GM12878 (cell line): ENCODE measurements at regions of chr19 and their contacts with region 1.

Region 1: GRCh38 chr19:771332-771785 is 20.4 kb downstream of the MISP start:
- DNase-seq: no peak
- ATAC-seq: peak; percentile 77
- H3K4me3 ChIP-seq: no peak overlapping the region
- H3K27ac ChIP-seq: no peak overlapping the region
- H3K4me1 ChIP-seq: no peaks in the 10 kb centered on the region
- H3K27me3 ChIP-seq: no peaks in the 10 kb centered on the region
- CTCF ChIP-seq: peak; percentile 39 to 57 (median 40); a peak in 5 of 6 replicates
- EP300 ChIP-seq: no peak
- POLR2A ChIP-seq: no peak
- RAD21 ChIP-seq: no peak

Region 2: DNA sequence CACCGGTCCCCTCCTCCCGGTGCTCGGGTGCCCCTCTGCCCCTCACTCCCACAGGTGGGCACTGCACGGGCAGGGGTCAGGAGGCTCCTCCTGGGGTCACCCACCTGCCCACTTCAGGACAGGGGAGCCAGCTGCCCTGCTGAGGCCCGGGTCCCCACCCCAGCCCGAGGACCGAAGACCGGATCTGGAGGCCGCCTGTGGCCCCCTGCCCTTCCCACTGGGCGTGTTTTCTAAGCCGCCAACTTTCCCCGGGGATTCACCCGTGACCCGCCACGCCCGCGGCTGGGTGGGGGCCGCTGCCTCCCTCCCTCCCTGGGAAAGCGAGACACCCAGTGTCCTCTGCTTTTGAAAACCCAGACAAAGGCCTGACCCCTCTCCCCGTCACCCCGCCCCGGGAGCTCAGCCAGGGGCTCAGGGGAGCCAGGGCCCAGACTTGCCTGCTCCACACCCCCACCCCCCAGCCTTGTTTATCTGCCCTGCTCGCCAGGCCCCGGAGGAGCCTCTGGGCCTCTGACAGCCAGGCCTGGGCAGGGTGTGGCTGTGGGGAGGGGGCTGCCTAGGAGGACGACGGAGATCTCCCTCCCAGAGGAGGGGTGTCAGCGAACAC is 61.3 kb before region 1 on chr19:
- CTCF ChIA-PET with region 1: no interaction called
- POLR2A ChIA-PET with region 1: no interaction called
- RAD21 ChIA-PET with region 1: no interaction called
- SMC1A ChIA-PET with region 1: no interaction called
- in situ Hi-C with region 1: no loop called
- intact Hi-C with region 1: no loop called
- DNase-seq: no peak
- ATAC-seq: no peak
- H3K4me3 ChIP-seq: no peak overlapping the region
- H3K27ac ChIP-seq: no peak overlapping the region
- H3K4me1 ChIP-seq: no peaks in the 10 kb centered on the region
- H3K27me3 ChIP-seq: peaks cover 0 to 2% of the 10 kb centered on the region in 2 experiments; a peak in 2 of 4 replicates
- CTCF ChIP-seq: no peak
- EP300 ChIP-seq: no peak
- POLR2A ChIP-seq: no peak
- RAD21 ChIP-seq: no peak

Region 3: GRCh38 chr19:821825-822503 is 50.6 kb after region 1 on chr19 and contains the start of gene PLPPR3:
- CTCF ChIA-PET with region 1: no interaction called
- POLR2A ChIA-PET with region 1: no interaction called
- RAD21 ChIA-PET with region 1: no interaction called
- SMC1A ChIA-PET with region 1: no interaction called
- in situ Hi-C with region 1: no loop called
- intact Hi-C with region 1: no loop called
- DNase-seq: no peak
- ATAC-seq: no peak
- H3K4me3 ChIP-seq: no peak within 1 kb of the TSS
- H3K27ac ChIP-seq: no peak within 1 kb of the TSS
- H3K4me1 ChIP-seq: no peaks in the 10 kb centered on the region
- H3K27me3 ChIP-seq: no peaks in the 10 kb centered on the region
- CTCF ChIP-seq: no peak
- EP300 ChIP-seq: no peak
- POLR2A ChIP-seq: no peak
- RAD21 ChIP-seq: no peak
- polyA plus RNA-seq, gene PLPPR3: not detected

Region 4: GRCh38 chr19:989381-990119 is 218.2 kb after region 1 on chr19:
- CTCF ChIA-PET with region 1: interaction called, 6 read pairs
- POLR2A ChIA-PET with region 1: interaction called, 3 read pairs
- RAD21 ChIA-PET with region 1: interaction called, 11 read pairs
- SMC1A ChIA-PET with region 1: no interaction called
- in situ Hi-C with region 1: loop called (anchors 5 kb)
- intact Hi-C with region 1: no loop called
- DNase-seq: no peak
- ATAC-seq: no peak
- H3K4me3 ChIP-seq: no peak overlapping the region
- H3K27ac ChIP-seq: no peak overlapping the region
- H3K4me1 ChIP-seq: 0 out of 2 replicates have a peak, but pooled peaks cover 3% of the 10 kb centered on the region
- H3K27me3 ChIP-seq: no peaks in the 10 kb centered on the region
- CTCF ChIP-seq: 0 out of 6 replicates have a peak, but pooled peaks have one; percentile 12 to 28 (median 13)
- EP300 ChIP-seq: no peak
- POLR2A ChIP-seq: peak; percentile 27; the same call in 1 of the 2 replicates
- RAD21 ChIP-seq: no peak